H1 (cell line): ENCODE measurements at regions of chr10 and their contacts with region 1.

Region 1: DNA sequence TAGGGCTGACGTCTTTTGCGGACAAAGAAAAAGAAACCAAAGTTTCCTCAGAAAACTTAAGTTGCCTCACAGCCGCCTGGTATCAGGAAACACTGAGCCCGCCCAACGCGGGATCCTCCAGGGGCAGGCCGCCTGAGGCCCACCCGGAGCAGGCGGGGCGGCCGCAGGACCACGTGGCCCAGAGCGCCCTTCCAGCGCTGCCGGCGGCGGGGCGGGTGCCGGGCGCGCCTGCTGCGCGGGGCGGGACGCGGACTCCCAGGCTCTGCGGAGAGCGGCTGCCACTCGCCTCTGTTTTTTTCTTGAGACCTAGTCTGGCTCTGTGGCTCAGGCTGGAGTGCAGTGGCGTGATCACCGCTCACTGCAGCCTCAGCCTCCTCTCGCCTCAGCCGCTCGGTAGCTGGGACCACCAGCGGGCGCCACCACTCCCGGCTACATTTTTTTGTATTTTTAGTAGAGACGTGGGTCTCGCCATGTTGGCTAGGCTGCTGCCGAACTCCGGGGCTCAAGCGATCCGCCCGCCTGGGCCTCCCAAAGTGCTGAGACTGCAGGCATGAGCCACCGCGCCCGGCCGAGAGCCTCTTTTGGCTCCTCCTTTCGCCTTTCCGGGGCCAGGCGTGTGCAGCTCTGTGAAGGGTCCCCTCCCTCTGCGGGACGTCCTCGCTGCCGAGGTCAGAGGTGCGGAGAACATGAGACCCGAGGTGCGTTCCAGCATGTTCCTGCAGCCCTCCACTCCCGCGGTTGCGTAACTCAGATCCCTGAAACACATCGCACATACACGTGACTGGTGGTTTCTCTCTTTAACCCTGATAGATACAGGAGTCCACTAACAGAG is 11.6 kb upstream of the HNRNPF start:
- DNase-seq: peak in 1 of 2 experiments; percentile 73
- H3K4me3 ChIP-seq: peak overlapping the region; percentile 46 to 60 (median 47)
- H3K27ac ChIP-seq: 0 out of 2 replicates have a peak overlapping the region, but pooled peaks have one; percentile 17
- H3K4me1 ChIP-seq: peaks cover 0 to 5% (median 2%) of the 10 kb centered on the region in 4 experiments; a peak in 4 of 7 replicates
- H3K27me3 ChIP-seq: no peaks in the 10 kb centered on the region; a peak in 1 of 7 replicates
- CTCF ChIP-seq: peak in 2 of 3 experiments; percentile 13 to 35; a peak in 2 of 4 replicates
- EP300 ChIP-seq: no peak
- POLR2A ChIP-seq: peak; percentile 41 to 80
- RAD21 ChIP-seq: no peak; a peak in 1 of 4 replicates

Region 2: DNA sequence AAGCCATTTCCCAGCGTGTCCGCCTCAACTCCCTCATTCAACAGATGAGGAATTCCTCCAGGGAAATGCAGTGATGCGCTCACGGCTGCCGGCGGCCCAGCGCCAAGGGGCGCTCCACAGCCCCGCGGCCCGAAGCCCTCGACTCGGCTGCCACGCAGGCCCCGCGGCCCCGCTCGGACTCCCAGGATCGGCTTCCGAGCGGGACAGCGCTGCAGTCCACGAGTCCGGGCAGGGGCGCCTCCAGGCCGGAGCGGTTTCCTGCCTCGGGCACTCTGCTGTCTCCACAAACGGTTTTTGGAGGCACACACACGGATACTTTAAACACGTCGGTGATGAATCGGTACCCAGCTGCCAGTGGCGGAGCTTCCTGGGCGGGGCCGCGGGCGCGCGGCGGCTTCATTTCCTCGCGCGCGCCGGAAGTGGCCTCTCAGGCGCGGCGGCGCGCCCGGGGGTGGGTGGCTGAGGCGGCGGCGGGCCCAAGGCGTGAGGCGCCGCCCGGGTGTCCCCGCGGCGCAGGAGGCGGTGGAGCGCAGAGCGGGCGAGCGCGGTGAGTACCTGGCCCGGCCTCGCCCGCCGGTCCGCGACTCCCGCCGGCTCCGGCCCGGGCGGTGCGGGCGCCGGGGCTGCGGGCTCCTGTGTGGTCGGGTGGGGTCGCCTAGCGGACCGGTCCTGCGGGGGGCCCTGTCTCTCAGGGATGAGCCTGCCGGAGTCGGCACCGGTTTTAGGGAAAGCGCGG is 282.4 kb before region 1 on chr10 and contains the start of gene CSGALNACT2:
- CTCF ChIA-PET with region 1: no interaction called
- POLR2A ChIA-PET with region 1: no interaction called
- DNase-seq: peak in 1 of 2 experiments; percentile 77
- H3K4me3 ChIP-seq: peak within 1 kb of the TSS; percentile 71 to 93 (median 80)
- H3K27ac ChIP-seq: no peak within 1 kb of the TSS
- H3K4me1 ChIP-seq: peaks cover 0 to 2% (median 0%) of the 10 kb centered on the region in 4 experiments; a peak in 4 of 7 replicates
- H3K27me3 ChIP-seq: peaks cover 0 to 7% (median 1%) of the 10 kb centered on the region in 4 experiments; a peak in 3 of 7 replicates
- CTCF ChIP-seq: no peak
- EP300 ChIP-seq: no peak
- POLR2A ChIP-seq: no peak
- RAD21 ChIP-seq: no peak
- total RNA-seq, gene CSGALNACT2: 5.3 and 5.7 TPM in 2 replicates

Region 3: DNA sequence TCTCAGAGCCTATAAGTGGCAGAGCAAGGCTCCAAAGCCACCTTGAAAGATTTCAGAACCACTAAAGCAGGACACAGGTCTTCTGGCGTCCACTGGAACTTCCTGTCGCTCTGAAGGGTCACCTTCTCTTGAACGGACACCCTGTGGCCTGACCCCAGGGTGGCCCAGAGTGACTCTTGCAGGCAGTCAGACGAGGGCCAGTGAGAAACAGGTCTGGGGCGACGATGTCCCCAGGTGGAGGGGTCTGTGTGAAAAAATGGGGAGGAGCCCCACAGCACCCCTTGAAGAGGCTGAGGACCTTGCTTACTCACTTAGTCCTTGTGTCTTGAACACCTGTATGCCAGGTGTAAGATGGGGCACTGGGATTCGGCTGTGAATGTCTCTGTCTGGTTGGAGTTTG is 152.8 kb before region 1 on chr10:
- CTCF ChIA-PET with region 1: no interaction called
- POLR2A ChIA-PET with region 1: no interaction called
- DNase-seq: no peak
- H3K4me3 ChIP-seq: 0 out of 8 replicates have a peak overlapping the region, but pooled peaks of 1 of the 4 experiments have one; percentile 56
- H3K27ac ChIP-seq: no peak overlapping the region
- H3K4me1 ChIP-seq: peaks cover 0 to 4% (median 3%) of the 10 kb centered on the region in 4 experiments; a peak in 5 of 7 replicates
- H3K27me3 ChIP-seq: peaks cover 19 to 36% (median 35%) of the 10 kb centered on the region in 4 experiments
- CTCF ChIP-seq: no peak
- EP300 ChIP-seq: no peak
- POLR2A ChIP-seq: no peak
- RAD21 ChIP-seq: no peak

Region 4: GRCh38 chr10:43361986-43362839 is 58.4 kb before region 1 on chr10:
- CTCF ChIA-PET with region 1: no interaction called
- POLR2A ChIA-PET with region 1: no interaction called
- DNase-seq: peak; percentile 86 to 92
- H3K4me3 ChIP-seq: peak overlapping the region; percentile 49 to 69 (median 62)
- H3K27ac ChIP-seq: peak overlapping the region; percentile 32; the same call in 1 of the 2 replicates
- H3K4me1 ChIP-seq: peaks cover 0 to 7% (median 2%) of the 10 kb centered on the region in 4 experiments; a peak in 4 of 7 replicates
- H3K27me3 ChIP-seq: no peaks in the 10 kb centered on the region; a peak in 2 of 7 replicates
- CTCF ChIP-seq: peak in 2 of 3 experiments; percentile 32 to 41; a peak in 3 of 4 replicates
- EP300 ChIP-seq: no peak
- POLR2A ChIP-seq: no peak; a peak in 1 of 3 replicates
- RAD21 ChIP-seq: peak; percentile 20 to 23; a peak in 3 of 4 replicates

Region 5: GRCh38 chr10:43436400-43437140 is 16.0 kb after region 1 on chr10 and contains the start of gene ZNF487:
- CTCF ChIA-PET with region 1: interaction called, 4 read pairs
- POLR2A ChIA-PET with region 1: interaction called, 16 read pairs
- DNase-seq: peak; percentile 51 to 94
- H3K4me3 ChIP-seq: peak within 1 kb of the TSS; percentile 66 to 81 (median 79)
- H3K27ac ChIP-seq: peak within 1 kb of the TSS; percentile 96
- H3K4me1 ChIP-seq: no peaks in the 10 kb centered on the region
- H3K27me3 ChIP-seq: no peaks in the 10 kb centered on the region
- CTCF ChIP-seq: peak in 2 of 3 experiments; percentile 11 to 22; a peak in 2 of 4 replicates
- EP300 ChIP-seq: no peak
- POLR2A ChIP-seq: peak; percentile 84 to 89
- RAD21 ChIP-seq: peak; percentile 17 to 42; a peak in 1 of 4 replicates
- total RNA-seq, gene ZNF487: 1.9 TPM in 2 replicates

Region 6: DNA sequence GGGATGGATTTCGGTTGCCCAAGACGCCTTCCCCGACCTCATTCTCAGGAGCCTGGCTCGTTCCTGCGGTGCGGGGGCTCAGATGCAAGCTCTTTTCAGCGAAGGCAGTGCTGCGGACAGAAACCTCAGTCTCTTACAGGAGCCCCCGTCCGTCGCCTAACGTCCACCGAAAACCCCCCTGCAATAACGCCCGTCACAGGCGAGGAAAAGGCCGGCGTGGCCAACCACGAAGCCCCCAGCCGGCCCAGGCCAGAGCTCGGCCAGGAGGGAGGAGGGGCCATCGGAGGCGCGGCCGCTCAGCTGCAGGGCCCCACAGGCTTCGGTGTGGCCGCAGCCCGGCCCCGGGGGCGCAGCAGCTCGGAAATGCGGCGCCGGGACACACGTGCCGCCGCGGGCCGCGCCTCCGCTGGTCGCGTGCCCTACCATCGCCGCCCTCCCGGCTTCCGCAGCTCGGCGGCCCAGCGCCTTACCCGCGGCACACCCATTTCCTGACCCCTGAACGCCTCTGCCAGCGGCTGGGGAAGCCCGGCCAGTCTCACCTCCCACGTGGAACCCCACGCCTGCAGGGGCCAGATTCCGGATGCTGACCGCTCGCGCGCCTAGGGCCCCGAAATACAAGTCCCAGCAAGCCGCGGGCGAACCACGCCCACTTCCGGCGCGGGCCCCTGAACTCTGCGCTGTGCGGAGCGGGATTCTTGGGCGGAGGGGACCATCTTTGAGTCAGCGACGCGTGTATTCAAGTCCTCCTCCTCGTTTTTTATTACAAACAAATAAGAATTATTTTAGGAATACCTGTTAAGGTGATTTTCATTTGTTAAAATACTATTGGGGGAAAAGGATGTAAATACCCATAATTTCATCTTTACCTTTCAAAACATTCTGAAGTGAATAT is 153.7 kb after region 1 on chr10 and contains the start of gene ZNF239:
- CTCF ChIA-PET with region 1: no interaction called
- POLR2A ChIA-PET with region 1: no interaction called
- DNase-seq: peak; percentile 34 to 87
- H3K4me3 ChIP-seq: peak within 1 kb of the TSS; percentile 32 to 64 (median 47)
- H3K27ac ChIP-seq: no peak within 1 kb of the TSS
- H3K4me1 ChIP-seq: peaks cover 0 to 5% (median 1%) of the 10 kb centered on the region in 4 experiments; a peak in 2 of 7 replicates
- H3K27me3 ChIP-seq: peaks cover 0 to 19% (median 9%) of the 10 kb centered on the region in 4 experiments; a peak in 6 of 7 replicates
- CTCF ChIP-seq: no peak
- EP300 ChIP-seq: no peak
- POLR2A ChIP-seq: no peak
- RAD21 ChIP-seq: no peak
- total RNA-seq, gene ZNF239: 10.3 and 11.4 TPM in 2 replicates